HEK293 (cell line): ENCODE measurements at regions of chr22 and their contacts with region 1.

Region 1: GRCh38 chr22:22156716-22157347 is 87.8 kb upstream of the VPREB1 start:
- H3K4me3 ChIP-seq: no peak overlapping the region
- H3K27ac ChIP-seq: no peak overlapping the region
- H3K4me1 ChIP-seq: no peaks in the 10 kb centered on the region
- CTCF ChIP-seq: peak; percentile 25; the same call in 1 of the 2 replicates

Region 2: DNA sequence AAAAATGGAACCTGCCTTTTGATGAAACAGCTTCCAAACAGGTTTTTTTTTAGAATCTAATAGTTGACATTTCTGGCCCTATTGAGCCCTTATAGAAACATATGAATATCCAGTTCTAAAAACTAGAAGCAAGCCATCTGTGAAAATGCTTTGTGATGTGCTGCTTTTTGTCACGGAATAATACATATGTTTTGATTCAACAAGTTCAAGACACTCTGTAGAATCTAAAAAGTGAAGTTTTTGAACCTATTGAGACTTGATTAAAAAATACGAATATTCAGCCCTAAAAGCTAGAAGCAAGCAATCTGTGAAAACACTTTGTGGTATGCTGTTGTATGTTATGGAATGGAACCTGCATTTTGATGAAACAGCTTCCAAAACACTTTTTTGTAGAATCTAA is 18.9 kb before region 1 on chr22:
- CTCF ChIA-PET with region 1: interaction called, 27 read pairs
- POLR2A ChIA-PET with region 1: no interaction called
- H3K4me3 ChIP-seq: no peak overlapping the region
- H3K27ac ChIP-seq: no peak overlapping the region
- H3K4me1 ChIP-seq: no peaks in the 10 kb centered on the region
- CTCF ChIP-seq: no peak

Region 3: DNA sequence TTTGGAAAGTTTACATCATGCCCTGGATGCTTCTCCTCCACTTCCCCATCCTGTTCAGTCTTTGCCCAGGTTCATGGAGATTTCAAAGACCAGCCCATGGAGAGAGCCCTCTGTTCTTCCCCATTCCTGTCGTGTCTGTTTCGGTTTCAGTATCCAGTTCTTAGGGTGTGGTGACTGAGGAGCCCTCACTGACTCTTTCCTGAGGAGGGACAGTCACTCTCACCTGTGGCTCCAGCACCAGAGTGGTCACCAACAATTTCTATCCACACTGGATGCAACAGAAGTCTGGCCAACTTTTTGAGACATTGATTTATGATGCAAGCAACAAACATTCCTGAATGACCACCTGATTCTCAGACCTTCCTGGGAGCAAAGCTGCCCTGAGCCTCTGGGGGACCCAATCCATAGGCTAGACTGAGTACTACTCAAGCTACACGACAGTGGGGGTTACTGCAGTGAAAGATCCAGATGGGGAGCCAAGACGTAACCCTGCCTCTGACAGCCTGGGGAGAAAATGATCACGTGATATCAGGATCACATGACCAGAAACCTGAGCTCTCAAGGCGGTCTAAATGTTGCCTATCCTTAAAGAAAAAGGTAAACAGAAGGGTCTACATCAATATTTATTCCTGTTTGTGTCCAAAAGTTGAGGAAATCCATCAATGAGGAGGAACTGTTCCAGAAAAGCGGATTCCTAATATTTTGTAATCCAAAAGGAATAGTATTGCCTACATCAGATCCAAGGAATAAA is 11.5 kb after region 1 on chr22:
- CTCF ChIA-PET with region 1: interaction called, 17 read pairs
- POLR2A ChIA-PET with region 1: no interaction called
- H3K4me3 ChIP-seq: no peak overlapping the region
- H3K27ac ChIP-seq: no peak overlapping the region
- H3K4me1 ChIP-seq: no peaks in the 10 kb centered on the region
- CTCF ChIP-seq: no peak

Region 4: GRCh38 chr22:22201185-22201929 is 44.5 kb after region 1 on chr22:
- CTCF ChIA-PET with region 1: interaction called, 13 read pairs
- POLR2A ChIA-PET with region 1: no interaction called
- H3K4me3 ChIP-seq: no peak overlapping the region
- H3K27ac ChIP-seq: no peak overlapping the region
- H3K4me1 ChIP-seq: no peaks in the 10 kb centered on the region
- CTCF ChIP-seq: peak; percentile 43; the same call in 1 of the 2 replicates

Region 5: DNA sequence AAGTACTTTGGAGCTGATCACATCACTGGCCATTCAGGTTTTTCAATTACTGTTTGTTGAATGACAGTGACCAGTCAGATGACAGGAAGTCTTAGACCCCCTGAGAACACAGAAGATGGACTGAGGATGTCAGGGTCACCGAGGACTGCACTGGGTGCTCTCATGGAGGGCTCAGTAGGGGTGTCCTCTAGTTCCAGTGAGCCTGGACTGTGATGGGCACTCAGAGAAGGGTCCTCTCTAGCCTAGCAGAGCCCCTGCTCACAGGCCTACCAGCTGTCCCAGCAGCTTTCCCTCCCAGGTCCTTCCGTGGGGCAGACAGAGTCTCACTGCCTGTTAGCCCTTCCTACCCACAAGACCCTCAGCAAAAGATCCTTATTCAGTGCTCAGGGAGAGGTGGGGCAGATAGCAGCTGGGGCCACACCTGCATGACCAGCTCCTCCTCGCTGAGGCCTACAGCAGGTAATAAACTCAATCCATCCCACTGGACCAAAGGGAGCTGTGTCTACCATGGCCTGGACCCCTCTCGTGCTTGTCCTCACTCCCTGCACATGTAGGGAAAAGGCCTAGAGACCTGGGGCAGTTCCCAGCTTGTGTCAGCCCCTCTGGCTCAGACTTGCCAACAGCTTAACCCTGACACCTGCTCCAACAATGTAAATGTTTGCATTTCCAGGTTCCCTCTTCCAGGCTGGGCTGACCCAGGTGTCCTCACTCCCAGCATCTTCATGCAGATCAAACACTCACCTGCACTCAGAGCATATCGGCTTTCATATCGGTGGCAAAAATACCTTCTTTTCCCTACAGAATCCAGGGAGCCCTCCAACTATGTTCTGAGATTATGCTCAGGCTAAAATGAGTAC is 62.5 kb after region 1 on chr22:
- CTCF ChIA-PET with region 1: no interaction called
- POLR2A ChIA-PET with region 1: no interaction called
- H3K4me3 ChIP-seq: no peak overlapping the region
- H3K27ac ChIP-seq: no peak overlapping the region
- H3K4me1 ChIP-seq: no peaks in the 10 kb centered on the region
- CTCF ChIP-seq: no peak